Mammary epithelial cell (primary cell): ENCODE measurements at regions of chr14 and their contacts with region 1.

Region 1: GRCh38 chr14:75258615-75259466 is 19.8 kb upstream of the FOS start:
- DNase-seq: peak; percentile 100
- H3K4me3 ChIP-seq: peak overlapping the region; percentile 0 to 37 (median 27)
- H3K27ac ChIP-seq: peak overlapping the region; percentile 97
- H3K4me1 ChIP-seq: peaks cover 52% of the 10 kb centered on the region
- H3K27me3 ChIP-seq: no peaks in the 10 kb centered on the region
- CTCF ChIP-seq: no peak

Region 2: GRCh38 chr14:75002392-75003249 is 256.2 kb before region 1 on chr14 and contains the start of gene EIF2B2:
- CTCF ChIA-PET with region 1: no interaction called
- dilution Hi-C with region 1: no loop called
- in situ Hi-C with region 1: no loop called
- intact Hi-C with region 1: no loop called
- DNase-seq: peak; percentile 99
- H3K4me3 ChIP-seq: peak within 1 kb of the TSS; percentile 69 to 89 (median 80)
- H3K27ac ChIP-seq: peak within 1 kb of the TSS; percentile 87
- H3K4me1 ChIP-seq: peaks cover 18% of the 10 kb centered on the region
- H3K27me3 ChIP-seq: no peaks in the 10 kb centered on the region
- CTCF ChIP-seq: peak in 1 of 2 donors; percentile 13
- total RNA-seq, gene EIF2B2: 47.8 to 57.3 TPM

Region 3: GRCh38 chr14:75069811-75070782 is 188.7 kb before region 1 on chr14:
- CTCF ChIA-PET with region 1: no interaction called
- dilution Hi-C with region 1: no loop called
- in situ Hi-C with region 1: no loop called
- intact Hi-C with region 1: no loop called
- DNase-seq: no peak
- H3K4me3 ChIP-seq: peak overlapping the region in 2 of 3 experiments; percentile 56 to 64
- H3K27ac ChIP-seq: peak overlapping the region; percentile 75
- H3K4me1 ChIP-seq: peaks cover 22% of the 10 kb centered on the region
- H3K27me3 ChIP-seq: no peaks in the 10 kb centered on the region
- CTCF ChIP-seq: no peak

Region 4: GRCh38 chr14:75230140-75231045 is 28.4 kb before region 1 on chr14:
- CTCF ChIA-PET with region 1: no interaction called
- dilution Hi-C with region 1: no loop called
- in situ Hi-C with region 1: no loop called
- intact Hi-C with region 1: loop called (anchors 1 kb)
- DNase-seq: peak; percentile 92
- H3K4me3 ChIP-seq: no peak overlapping the region
- H3K27ac ChIP-seq: peak overlapping the region; percentile 92
- H3K4me1 ChIP-seq: peaks cover 32% of the 10 kb centered on the region
- H3K27me3 ChIP-seq: no peaks in the 10 kb centered on the region
- CTCF ChIP-seq: peak; percentile 34 to 38

Region 5: GRCh38 chr14:75242546-75243273 is 16.1 kb before region 1 on chr14:
- CTCF ChIA-PET with region 1: no interaction called
- dilution Hi-C with region 1: no loop called
- in situ Hi-C with region 1: no loop called
- intact Hi-C with region 1: loop called (anchors 1 kb)
- DNase-seq: peak; percentile 84
- H3K4me3 ChIP-seq: no peak overlapping the region
- H3K27ac ChIP-seq: peak overlapping the region; percentile 73
- H3K4me1 ChIP-seq: peaks cover 10% of the 10 kb centered on the region
- H3K27me3 ChIP-seq: no peaks in the 10 kb centered on the region
- CTCF ChIP-seq: no peak

Region 6: DNA sequence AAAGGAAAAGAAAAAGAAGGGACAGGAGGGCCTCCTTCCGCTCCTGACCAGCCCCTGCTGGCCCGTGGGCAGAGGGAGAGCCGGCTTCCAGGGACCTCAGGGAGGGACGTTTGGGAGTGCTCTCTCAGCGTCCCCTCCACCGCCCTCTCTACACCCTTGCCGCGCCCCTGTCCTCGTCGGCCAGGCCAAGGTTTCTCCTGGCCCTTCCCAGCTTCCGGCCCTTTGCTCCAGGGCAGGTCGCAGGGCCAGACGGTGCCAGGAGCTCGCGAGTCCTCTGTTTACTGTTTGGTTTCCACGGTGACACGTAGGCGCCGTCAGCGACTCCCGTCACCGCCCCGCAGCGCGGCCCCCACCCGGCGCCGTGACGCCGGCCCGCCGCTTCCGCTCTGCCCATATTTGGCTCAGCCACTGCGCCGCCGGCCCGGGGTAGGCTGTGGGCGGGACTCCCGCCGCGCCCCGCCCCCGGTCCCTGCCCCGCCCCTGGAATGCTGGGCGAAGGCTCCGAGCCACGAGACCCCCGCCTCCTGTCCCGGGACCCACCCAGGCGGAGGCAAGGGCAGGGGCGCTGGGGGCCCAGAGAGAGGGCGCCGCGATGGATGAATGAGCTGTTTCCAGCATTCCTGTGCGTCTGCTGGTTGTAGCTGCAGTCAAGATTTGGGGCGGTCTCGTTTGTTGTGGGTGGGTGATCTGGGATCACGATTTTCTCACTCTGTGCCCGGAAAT is 35.2 kb after region 1 on chr14:
- CTCF ChIA-PET with region 1: interaction called, 4 read pairs
- dilution Hi-C with region 1: no loop called
- in situ Hi-C with region 1: no loop called
- intact Hi-C with region 1: loop called (anchors 2 kb)
- DNase-seq: peak; percentile 95
- H3K4me3 ChIP-seq: peak overlapping the region; percentile 73 to 86 (median 80)
- H3K27ac ChIP-seq: peak overlapping the region; percentile 99
- H3K4me1 ChIP-seq: peaks cover 32% of the 10 kb centered on the region
- H3K27me3 ChIP-seq: no peaks in the 10 kb centered on the region
- CTCF ChIP-seq: peak in 1 of 2 donors; percentile 3

Region 7: GRCh38 chr14:75333606-75334548 is 75.0 kb after region 1 on chr14:
- CTCF ChIA-PET with region 1: no interaction called
- dilution Hi-C with region 1: no loop called
- in situ Hi-C with region 1: no loop called
- intact Hi-C with region 1: no loop called
- DNase-seq: no peak
- H3K4me3 ChIP-seq: no peak overlapping the region
- H3K27ac ChIP-seq: no peak overlapping the region
- H3K4me1 ChIP-seq: no peaks in the 10 kb centered on the region
- H3K27me3 ChIP-seq: no peaks in the 10 kb centered on the region
- CTCF ChIP-seq: no peak